Activated CD4-positive, alpha-beta memory T cell treated with anti-CD3 and anti-CD28 coated beads for 36 hours (primary cell): ENCODE measurements at regions of chr12 and their contacts with region 1.

Region 1: DNA sequence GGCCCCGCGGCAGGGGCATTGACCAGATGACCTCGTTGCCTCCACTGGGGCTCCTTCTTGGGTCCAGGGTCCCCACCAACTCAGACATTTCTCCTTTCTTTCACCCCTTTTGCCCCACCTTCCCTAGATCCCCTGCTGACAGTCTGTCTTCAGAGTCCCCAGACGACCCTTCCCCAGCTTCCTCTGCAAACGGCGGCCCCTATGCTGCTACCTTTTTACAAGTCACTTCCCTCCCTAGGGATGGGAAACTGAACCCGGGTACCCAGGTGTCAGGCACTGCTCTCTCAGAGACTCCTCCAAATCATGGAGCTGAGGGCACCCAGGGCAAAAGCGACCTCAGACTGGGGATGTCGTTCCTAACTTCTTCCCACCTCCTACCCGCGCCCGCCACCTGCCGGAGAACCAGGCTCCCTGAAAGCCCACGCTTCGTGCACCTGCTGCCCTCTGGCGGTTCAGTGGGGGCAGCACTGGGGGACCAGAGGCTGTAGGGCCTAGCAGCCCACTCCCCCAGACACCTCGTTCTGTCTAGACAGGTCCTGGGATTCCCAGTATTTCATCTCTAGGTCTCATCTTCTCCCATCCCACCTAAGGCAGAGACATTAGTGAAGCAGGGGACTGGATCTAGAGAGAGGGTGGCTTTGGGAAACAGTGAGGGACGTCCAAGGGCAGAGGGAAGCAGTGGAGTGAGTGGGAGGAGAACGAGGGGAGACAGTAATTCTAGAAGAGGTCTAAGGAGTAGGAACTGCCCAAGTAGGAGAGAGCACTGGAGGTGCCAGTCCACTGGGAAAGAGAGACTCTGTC is 4.9 kb downstream of the ZNF385A start:
- DNase-seq: peak; percentile 94
- H3K4me3 Mint-ChIP-seq: peak overlapping the region; percentile 22
- H3K27ac Mint-ChIP-seq: no peak overlapping the region
- H3K4me1 Mint-ChIP-seq: peaks cover 10% of the 10 kb centered on the region
- H3K27me3 Mint-ChIP-seq: no peaks in the 10 kb centered on the region

Region 2: DNA sequence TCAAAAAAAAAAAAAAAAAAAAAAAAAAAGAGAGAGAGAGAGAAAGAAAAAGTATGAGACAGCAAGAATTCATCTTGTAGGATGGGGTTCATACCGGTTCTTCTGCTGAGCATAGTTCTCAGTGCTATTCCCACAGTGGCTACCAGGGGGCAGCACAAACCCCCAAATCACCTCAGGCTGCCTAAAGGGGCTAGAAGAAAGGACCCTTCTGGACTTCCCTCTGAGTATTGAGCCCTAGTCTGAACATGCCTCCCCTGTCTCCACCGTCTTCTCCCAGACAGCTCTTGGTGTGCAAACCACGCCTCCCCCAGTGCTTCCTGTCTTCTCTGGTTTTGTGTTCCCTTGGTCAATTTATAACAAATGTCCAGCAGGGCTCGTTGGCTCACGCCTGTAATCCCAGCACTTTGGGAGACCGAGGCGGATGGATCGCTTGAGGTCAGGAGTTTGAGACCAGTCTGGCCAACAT is 159.5 kb before region 1 on chr12:
- CTCF ChIA-PET with region 1: interaction called, 32 read pairs
- POLR2A ChIA-PET with region 1: no interaction called
- intact Hi-C with region 1: no loop called
- DNase-seq: peak; percentile 84
- H3K4me3 Mint-ChIP-seq: no peak overlapping the region
- H3K27ac Mint-ChIP-seq: no peak overlapping the region
- H3K4me1 Mint-ChIP-seq: peaks cover 18% of the 10 kb centered on the region
- H3K27me3 Mint-ChIP-seq: no peaks in the 10 kb centered on the region

Region 3: DNA sequence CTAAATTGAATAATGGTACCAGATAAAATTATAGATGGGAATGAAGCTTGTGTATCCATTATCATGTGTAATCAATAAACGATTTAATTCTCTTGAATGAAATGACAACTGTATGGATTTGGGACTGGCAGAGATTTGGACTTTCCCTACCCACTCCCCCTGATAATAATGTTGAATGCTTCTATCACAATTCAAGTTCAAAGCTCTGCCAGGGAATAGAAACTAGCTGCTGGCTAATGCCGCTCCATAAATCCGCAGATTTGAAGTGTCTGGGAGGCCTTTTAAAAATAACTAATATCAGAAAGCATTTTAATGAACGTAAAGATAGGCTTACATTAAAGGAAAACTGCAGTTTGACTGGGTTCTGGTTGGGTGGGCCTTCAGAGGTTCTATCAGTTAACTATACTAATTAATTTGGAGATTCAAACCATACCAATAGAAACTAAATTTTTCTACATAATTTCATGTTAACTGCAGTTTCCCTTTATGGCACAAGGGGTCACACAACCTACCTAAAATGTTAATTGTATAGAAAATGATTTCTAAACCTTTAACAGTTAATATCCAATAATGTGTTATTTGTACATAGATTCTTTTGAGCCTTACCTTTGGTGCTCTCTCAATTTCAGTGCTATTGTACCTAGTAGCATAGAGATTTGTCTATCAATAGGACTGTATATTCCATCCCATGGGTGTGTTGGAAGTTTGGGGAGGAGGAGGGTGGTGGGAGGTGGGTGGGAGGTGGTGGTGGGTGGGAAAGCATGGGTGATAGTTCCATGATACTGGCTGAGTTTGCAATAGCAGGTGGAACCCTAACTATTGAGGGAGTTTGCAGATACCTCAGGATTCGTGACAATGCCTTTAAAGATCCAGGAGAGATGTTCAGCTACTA is 94.2 kb before region 1 on chr12:
- CTCF ChIA-PET with region 1: interaction called, 101 read pairs
- POLR2A ChIA-PET with region 1: no interaction called
- intact Hi-C with region 1: no loop called
- DNase-seq: no peak
- H3K4me3 Mint-ChIP-seq: peak overlapping the region; percentile 47
- H3K27ac Mint-ChIP-seq: peak overlapping the region; percentile 52
- H3K4me1 Mint-ChIP-seq: peaks cover 39% of the 10 kb centered on the region
- H3K27me3 Mint-ChIP-seq: no peaks in the 10 kb centered on the region

Region 4: GRCh38 chr12:54324617-54325441 is 54.8 kb before region 1 on chr12 and contains the start of gene COPZ1:
- CTCF ChIA-PET with region 1: interaction called, 11 read pairs
- POLR2A ChIA-PET with region 1: no interaction called
- intact Hi-C with region 1: no loop called
- DNase-seq: peak; percentile 97
- H3K4me3 Mint-ChIP-seq: peak within 1 kb of the TSS; percentile 95
- H3K27ac Mint-ChIP-seq: peak within 1 kb of the TSS; percentile 84
- H3K4me1 Mint-ChIP-seq: peaks cover 33% of the 10 kb centered on the region
- H3K27me3 Mint-ChIP-seq: no peaks in the 10 kb centered on the region
- total RNA-seq, gene COPZ1: 99.0 to 110 TPM

Region 5: GRCh38 chr12:54359033-54359761 is 20.4 kb before region 1 on chr12:
- CTCF ChIA-PET with region 1: interaction called, 29 read pairs
- POLR2A ChIA-PET with region 1: no interaction called
- intact Hi-C with region 1: loop called (anchors 1 kb)
- DNase-seq: peak; percentile 97
- H3K4me3 Mint-ChIP-seq: no peak overlapping the region
- H3K27ac Mint-ChIP-seq: no peak overlapping the region
- H3K4me1 Mint-ChIP-seq: peaks cover 16% of the 10 kb centered on the region
- H3K27me3 Mint-ChIP-seq: no peaks in the 10 kb centered on the region

Region 6: GRCh38 chr12:54439521-54440255 is 60.1 kb after region 1 on chr12:
- CTCF ChIA-PET with region 1: interaction called, 42 read pairs
- POLR2A ChIA-PET with region 1: no interaction called
- intact Hi-C with region 1: no loop called
- DNase-seq: no peak
- H3K4me3 Mint-ChIP-seq: no peak overlapping the region
- H3K27ac Mint-ChIP-seq: no peak overlapping the region
- H3K4me1 Mint-ChIP-seq: peaks cover 6% of the 10 kb centered on the region
- H3K27me3 Mint-ChIP-seq: peaks cover 2% of the 10 kb centered on the region

Region 7: GRCh38 chr12:54662026-54662425 is 282.4 kb after region 1 on chr12:
- CTCF ChIA-PET with region 1: no interaction called
- POLR2A ChIA-PET with region 1: no interaction called
- intact Hi-C with region 1: no loop called
- DNase-seq: no peak
- H3K4me3 Mint-ChIP-seq: no peak overlapping the region
- H3K27ac Mint-ChIP-seq: no peak overlapping the region
- H3K4me1 Mint-ChIP-seq: no peaks in the 10 kb centered on the region
- H3K27me3 Mint-ChIP-seq: peaks cover 15% of the 10 kb centered on the region